ENCODE measurements at regions of chr10 and their contacts with region 1.

Region 1: DNA sequence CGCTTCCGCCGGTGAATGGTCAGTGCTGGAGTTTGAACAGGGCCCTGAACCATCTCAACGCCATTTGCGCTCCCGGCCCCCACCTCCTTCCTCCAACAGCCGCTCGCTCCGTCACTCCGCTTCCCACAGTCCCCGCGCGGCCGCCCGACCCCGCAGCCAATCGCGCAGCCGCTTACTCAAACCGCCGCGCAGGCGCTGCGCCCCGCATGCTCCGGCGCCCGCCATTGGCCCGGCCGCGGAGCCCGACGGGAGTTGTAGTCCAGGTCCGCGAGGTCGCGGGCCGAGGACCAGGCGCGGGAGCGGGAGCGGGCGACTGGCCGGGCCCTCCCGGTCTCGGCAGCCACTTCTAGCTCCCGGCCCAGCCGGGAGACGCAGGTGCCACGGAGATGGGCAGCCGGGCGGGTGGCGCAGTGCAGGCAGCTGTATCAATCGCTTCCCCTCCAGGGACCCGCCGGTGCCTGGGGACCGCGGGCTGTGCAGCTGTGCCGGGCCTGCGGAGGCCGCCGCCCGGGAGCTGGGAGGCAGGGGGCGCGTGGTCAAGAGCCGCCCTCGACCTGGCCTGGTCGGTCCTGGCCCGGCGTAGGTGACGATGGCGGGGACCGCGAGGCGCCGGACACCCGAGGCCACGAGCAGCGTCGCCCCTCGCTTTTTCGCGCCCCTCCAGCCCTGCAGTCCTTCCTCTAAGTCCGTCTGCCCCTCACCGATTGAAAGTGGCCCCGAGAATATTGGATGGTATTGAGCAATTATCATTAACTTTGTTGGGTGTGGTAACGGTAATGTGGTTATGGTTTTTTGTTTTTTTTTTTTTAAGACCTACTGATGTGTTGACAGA is at the start of gene WAPL:
- DNase-seq: peak; percentile 98
- H3K4me3 ChIP-seq: peak within 1 kb of the TSS; percentile 78 to 96 (median 88)
- H3K27ac ChIP-seq: peak within 1 kb of the TSS; percentile 93 to 99 (median 97)
- H3K4me1 ChIP-seq: peaks cover 0 to 60% (median 51%) of the 10 kb centered on the region in 4 donors
- H3K27me3 ChIP-seq: no peaks in the 10 kb centered on the region
- CTCF ChIP-seq: no peak
- EP300 ChIP-seq: no peak
- POLR2A ChIP-seq: peak; percentile 39 to 62
- total RNA-seq, gene WAPL: 33.8 to 44.2 (median 37.0) TPM

Region 2: GRCh38 chr10:86481761-86482160 is 40.1 kb before region 1 on chr10:
- intact Hi-C with region 1: no loop called
- DNase-seq: no peak
- H3K4me3 ChIP-seq: no peak overlapping the region
- H3K27ac ChIP-seq: no peak overlapping the region
- H3K4me1 ChIP-seq: no peaks in the 10 kb centered on the region
- H3K27me3 ChIP-seq: no peaks in the 10 kb centered on the region
- CTCF ChIP-seq: no peak
- EP300 ChIP-seq: no peak
- POLR2A ChIP-seq: no peak

Region 3: DNA sequence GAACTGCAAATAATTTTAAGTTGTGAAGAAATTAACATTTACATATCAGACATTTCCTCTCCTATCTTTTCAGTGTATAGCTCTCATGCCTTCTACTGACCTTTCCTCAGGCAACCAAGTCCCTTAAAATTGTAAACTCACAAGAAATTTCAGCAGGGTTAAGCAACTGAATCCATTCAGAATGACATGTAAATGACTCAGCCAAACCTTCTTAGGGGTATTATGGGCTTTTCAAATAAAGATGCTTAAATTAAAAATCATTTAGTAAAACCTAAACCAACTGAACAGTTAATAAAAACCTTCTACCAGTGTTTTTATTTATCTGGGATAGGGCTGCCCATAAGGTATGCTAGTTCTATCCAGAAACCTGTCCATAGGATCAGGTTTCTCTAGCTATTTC is 21.0 kb before region 1 on chr10:
- intact Hi-C with region 1: no loop called
- DNase-seq: no peak
- H3K4me3 ChIP-seq: no peak overlapping the region
- H3K27ac ChIP-seq: no peak overlapping the region
- H3K4me1 ChIP-seq: peaks cover 0 to 38% (median 13%) of the 10 kb centered on the region in 4 donors
- H3K27me3 ChIP-seq: no peaks in the 10 kb centered on the region
- CTCF ChIP-seq: no peak
- EP300 ChIP-seq: no peak
- POLR2A ChIP-seq: no peak

Region 4: DNA sequence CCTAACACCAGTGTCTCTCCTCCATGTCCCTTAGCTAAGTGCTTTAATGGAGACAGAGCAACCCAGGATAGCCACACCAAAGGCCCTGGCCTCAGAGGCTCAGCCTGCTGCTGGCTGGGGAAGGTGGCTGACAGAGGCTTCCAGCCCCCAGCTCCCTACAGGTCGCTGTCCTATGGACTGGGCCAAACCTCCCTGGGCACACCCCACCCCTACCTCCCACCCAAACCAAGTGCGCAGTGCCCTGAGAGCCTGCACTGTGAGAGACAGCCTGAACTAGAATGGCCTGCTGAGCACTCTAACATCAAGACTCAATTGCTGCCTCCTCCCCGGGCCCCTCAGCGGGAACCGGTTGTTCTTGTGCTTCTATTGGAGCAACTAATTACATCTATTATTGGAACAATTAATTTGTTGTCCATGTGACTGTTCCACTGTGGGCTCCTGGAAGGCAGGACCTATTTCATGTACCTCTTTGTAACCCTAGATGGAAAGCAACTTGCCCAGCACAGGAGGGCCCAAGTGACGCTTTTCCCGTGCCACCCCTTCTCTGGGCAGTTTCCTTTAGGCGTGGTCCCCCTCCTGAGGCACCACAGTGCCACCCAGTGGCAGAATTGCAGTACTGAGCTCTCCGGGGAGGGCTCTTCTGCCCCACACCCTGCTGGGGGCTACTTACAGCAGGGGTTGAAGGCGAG is 63.3 kb after region 1 on chr10:
- intact Hi-C with region 1: loop called (anchors 5 kb)
- DNase-seq: peak; percentile 82
- H3K4me3 ChIP-seq: no peak overlapping the region
- H3K27ac ChIP-seq: peak overlapping the region in 1 of 4 donors; percentile 30
- H3K4me1 ChIP-seq: peaks cover 0 to 8% (median 5%) of the 10 kb centered on the region in 4 donors
- H3K27me3 ChIP-seq: no peaks in the 10 kb centered on the region
- CTCF ChIP-seq: peak; percentile 81 to 96 (median 94)
- EP300 ChIP-seq: no peak
- POLR2A ChIP-seq: no peak

Region 5: GRCh38 chr10:86632009-86632800 is 110.3 kb after region 1 on chr10:
- intact Hi-C with region 1: loop called (anchors 5 kb)
- DNase-seq: no peak
- H3K4me3 ChIP-seq: peak overlapping the region; percentile 1 to 49 (median 40)
- H3K27ac ChIP-seq: peak overlapping the region in 1 of 4 donors; percentile 57
- H3K4me1 ChIP-seq: peaks cover 0 to 26% (median 14%) of the 10 kb centered on the region in 4 donors
- H3K27me3 ChIP-seq: no peaks in the 10 kb centered on the region
- CTCF ChIP-seq: peak in 3 of 4 experiments; percentile 23 to 35 (median 32)
- EP300 ChIP-seq: no peak
- POLR2A ChIP-seq: no peak

Region 6: DNA sequence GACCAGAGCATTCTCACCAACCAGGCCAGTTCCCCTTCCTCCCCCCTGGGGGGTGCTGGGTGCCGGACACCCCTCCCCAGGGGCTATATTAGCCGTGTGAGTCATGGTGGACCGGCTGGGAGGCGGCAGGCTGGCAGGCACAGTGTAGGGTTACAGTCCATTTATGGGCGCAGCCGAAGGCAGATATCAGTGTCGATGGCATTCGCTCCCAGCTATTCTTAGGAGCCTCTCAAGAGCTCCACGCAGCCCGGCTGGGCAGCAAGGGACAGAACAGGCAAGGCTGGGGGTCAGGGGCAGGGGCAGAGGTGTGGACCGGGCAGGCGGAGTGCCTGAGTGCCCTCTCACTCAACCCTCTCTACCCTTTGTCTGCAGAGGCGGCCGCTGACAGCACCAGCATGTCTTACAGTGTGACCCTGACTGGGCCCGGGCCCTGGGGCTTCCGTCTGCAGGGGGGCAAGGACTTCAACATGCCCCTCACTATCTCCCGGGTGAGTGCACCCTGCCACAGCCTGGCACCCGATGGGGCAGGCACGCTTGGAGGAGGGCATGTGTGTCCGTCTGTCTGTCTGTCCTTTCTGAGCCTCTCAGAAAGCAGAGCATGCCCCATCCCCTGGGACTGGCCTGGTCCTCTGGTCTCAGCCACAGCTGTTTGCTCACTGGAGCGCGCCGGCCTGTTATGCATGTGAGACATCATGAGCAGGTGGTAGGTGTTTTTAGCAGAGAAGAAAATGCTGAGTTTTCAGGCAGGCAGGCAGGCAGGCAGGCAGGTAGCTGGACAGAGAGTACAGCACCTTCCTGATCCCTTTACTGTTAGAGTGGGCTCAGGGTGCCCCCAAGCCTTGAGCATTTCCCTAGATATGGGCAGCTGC is 146.6 kb after region 1 on chr10 and contains the start of gene LDB3:
- intact Hi-C with region 1: loop called (anchors 5 kb)
- DNase-seq: peak; percentile 91
- H3K4me3 ChIP-seq: peak within 1 kb of the TSS; percentile 44 to 60 (median 50)
- H3K27ac ChIP-seq: peak within 1 kb of the TSS; percentile 87 to 96 (median 92)
- H3K4me1 ChIP-seq: peaks cover 0 to 79% (median 57%) of the 10 kb centered on the region in 4 donors
- H3K27me3 ChIP-seq: no peaks in the 10 kb centered on the region
- CTCF ChIP-seq: no peak
- EP300 ChIP-seq: no peak
- POLR2A ChIP-seq: peak; percentile 84 to 92
- total RNA-seq, gene LDB3: 13.2 to 42.1 (median 22.4) TPM

Measured in sigmoid colon (tissue), 7 donors.